ENCODE measurements at regions of chr2 and their contacts with region 1.

Region 1: DNA sequence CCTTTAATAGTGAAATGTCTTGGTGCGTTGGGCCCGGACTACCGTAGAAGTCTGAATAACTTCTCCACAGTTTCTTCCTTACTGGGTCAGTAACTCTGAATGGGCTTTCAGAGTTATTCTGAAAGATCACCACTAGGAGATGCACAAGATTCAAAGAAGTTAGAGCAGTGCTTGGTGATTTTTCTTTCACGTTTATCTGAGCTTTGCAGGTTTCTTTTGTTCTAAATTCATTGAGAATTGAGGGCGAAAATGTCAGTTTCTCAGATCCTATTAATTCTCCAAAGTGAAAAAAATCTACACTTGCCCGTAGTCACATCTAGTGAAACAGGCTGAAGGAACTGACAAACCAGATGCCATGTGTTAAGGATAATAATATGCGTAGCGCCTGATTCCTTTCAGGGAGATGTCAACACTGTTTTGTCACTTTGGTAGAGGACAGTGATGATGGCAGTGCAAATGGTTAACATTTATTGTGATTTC is 70.1 kb downstream of the QPCT start:
- DNase-seq: peak; percentile 71
- H3K4me3 ChIP-seq: no peak overlapping the region
- H3K27ac ChIP-seq: no peak overlapping the region
- H3K4me1 ChIP-seq: peaks cover 6% of the 10 kb centered on the region
- H3K27me3 ChIP-seq: no peaks in the 10 kb centered on the region
- CTCF ChIP-seq: peak; percentile 74 to 86
- POLR2A ChIP-seq: no peak

Region 2: DNA sequence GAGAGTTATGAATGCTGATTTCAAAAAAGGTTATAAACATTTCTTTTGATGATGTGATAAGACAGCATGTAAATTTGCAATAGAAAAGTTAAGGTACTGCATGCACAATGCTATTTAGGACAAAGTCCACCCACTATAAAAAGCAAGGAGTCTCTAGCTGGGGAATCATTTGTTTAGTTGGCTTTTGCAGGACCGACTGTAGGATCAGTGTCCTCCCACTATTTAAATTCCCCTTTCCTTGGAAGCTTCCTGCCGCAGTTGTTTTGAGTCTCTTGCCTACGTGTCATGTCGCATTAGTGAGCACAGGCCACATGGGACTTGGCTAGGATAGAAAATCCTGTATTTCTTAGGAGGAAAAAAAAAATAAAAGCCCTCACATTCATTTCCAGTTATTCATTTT is 57.0 kb before region 1 on chr2:
- CTCF ChIA-PET with region 1: no interaction called
- POLR2A ChIA-PET with region 1: no interaction called
- dilution Hi-C with region 1: no loop called
- intact Hi-C with region 1: no loop called
- DNase-seq: no peak
- H3K4me3 ChIP-seq: no peak overlapping the region
- H3K27ac ChIP-seq: no peak overlapping the region
- H3K4me1 ChIP-seq: no peaks in the 10 kb centered on the region
- H3K27me3 ChIP-seq: no peaks in the 10 kb centered on the region
- CTCF ChIP-seq: no peak
- POLR2A ChIP-seq: no peak

Region 3: GRCh38 chr2:37389989-37390765 is 24.3 kb before region 1 on chr2:
- CTCF ChIA-PET with region 1: interaction called, 57 read pairs
- POLR2A ChIA-PET with region 1: no interaction called
- dilution Hi-C with region 1: no loop called
- intact Hi-C with region 1: no loop called
- DNase-seq: peak; percentile 88
- H3K4me3 ChIP-seq: no peak overlapping the region
- H3K27ac ChIP-seq: peak overlapping the region; percentile 78
- H3K4me1 ChIP-seq: peaks cover 28% of the 10 kb centered on the region
- H3K27me3 ChIP-seq: no peaks in the 10 kb centered on the region
- CTCF ChIP-seq: no peak
- POLR2A ChIP-seq: peak; percentile 82

Region 4: DNA sequence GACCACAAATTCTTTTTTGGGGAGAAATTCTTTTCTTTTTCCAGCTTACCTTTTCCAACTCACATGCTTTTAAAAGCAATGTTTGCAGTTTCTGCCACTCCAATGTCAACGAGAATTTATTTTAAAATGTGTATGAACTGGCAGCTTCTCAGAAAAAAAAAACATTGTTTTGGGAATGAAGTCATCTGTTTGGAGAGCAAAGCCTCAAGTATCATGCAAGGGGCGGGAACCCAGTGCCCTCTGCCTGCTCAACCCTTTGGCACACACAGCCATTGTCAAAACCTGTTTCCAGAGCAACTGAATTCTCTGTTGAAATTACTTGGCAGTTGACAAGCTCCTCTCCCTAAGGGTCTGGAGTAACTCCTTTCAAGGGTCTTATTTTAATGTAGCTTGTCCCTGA is 58.4 kb after region 1 on chr2:
- CTCF ChIA-PET with region 1: interaction called, 14 read pairs
- POLR2A ChIA-PET with region 1: no interaction called
- dilution Hi-C with region 1: no loop called
- intact Hi-C with region 1: no loop called
- DNase-seq: peak; percentile 82
- H3K4me3 ChIP-seq: no peak overlapping the region
- H3K27ac ChIP-seq: no peak overlapping the region
- H3K4me1 ChIP-seq: peaks cover 6% of the 10 kb centered on the region
- H3K27me3 ChIP-seq: no peaks in the 10 kb centered on the region
- CTCF ChIP-seq: no peak
- POLR2A ChIP-seq: no peak

Region 5: GRCh38 chr2:37500031-37500430 is 85.5 kb after region 1 on chr2:
- CTCF ChIA-PET with region 1: no interaction called
- POLR2A ChIA-PET with region 1: no interaction called
- dilution Hi-C with region 1: no loop called
- intact Hi-C with region 1: no loop called
- DNase-seq: no peak
- H3K4me3 ChIP-seq: no peak overlapping the region
- H3K27ac ChIP-seq: no peak overlapping the region
- H3K4me1 ChIP-seq: no peaks in the 10 kb centered on the region
- H3K27me3 ChIP-seq: no peaks in the 10 kb centered on the region
- CTCF ChIP-seq: no peak
- POLR2A ChIP-seq: no peak

Region 6: DNA sequence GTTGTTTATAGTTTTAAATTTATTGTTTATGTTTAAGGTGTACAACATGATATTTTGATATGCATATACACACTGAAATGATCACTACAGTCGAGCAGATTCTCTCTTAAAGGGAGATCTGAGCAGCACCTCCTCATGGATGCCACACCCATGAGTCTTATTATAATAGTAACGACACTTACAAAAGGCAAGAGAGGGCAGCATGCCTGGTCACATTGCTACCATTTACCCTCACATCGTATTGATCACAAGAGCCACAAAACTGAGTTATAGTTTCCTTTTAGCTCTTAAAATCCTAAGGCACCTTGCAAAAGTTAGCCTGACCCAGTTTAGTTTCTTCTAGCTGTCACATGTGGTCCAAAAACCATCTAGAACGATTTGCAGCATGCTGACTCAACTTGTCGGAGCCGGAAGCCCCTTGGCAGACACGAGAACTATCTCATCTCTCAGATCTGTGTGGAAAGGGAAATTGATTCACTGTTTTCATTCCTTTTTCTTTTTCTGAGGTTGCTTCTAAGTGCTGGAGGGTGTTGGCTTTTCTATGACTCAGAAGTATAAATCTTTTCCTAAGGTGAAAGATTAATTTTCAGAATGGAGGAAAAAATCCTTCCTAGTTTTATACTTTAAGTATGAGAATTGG is 171.6 kb after region 1 on chr2:
- CTCF ChIA-PET with region 1: interaction called, 19 read pairs
- POLR2A ChIA-PET with region 1: no interaction called
- dilution Hi-C with region 1: no loop called
- intact Hi-C with region 1: loop called (anchors 2 kb)
- DNase-seq: peak; percentile 96
- H3K4me3 ChIP-seq: no peak overlapping the region
- H3K27ac ChIP-seq: peak overlapping the region; percentile 75
- H3K4me1 ChIP-seq: peaks cover 88% of the 10 kb centered on the region
- H3K27me3 ChIP-seq: no peaks in the 10 kb centered on the region
- CTCF ChIP-seq: no peak
- POLR2A ChIP-seq: no peak

Region 7: DNA sequence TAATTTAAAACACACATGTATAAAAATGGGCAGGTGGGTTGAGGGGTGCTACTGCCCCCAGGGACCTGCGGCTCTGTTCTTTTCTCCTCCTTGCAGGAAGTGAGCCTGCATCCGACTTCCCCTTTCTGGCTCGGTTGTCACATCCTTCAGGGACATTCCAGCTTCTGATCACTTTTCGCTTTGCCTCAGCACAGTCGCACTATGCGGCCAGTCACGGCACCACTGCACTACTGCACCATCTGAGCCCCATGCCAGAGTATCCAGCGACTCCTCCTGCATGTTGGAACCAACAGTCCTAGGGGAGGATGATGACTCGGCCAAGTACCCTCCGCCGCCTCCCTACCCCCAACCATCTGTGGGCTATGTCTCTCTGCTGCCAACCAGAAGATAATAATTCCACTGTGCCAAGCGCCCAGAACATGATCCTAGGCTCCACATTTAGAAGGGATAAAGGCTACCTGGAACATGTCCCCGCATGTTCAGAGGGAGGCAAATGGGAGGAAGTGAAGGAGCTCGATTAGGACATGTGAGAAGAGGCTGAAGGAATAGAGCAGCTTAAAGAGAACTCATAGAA is 239.4 kb after region 1 on chr2:
- CTCF ChIA-PET with region 1: interaction called, 28 read pairs
- POLR2A ChIA-PET with region 1: no interaction called
- dilution Hi-C with region 1: no loop called
- intact Hi-C with region 1: loop called (anchors 1 kb)
- DNase-seq: no peak
- H3K4me3 ChIP-seq: no peak overlapping the region
- H3K27ac ChIP-seq: peak overlapping the region; percentile 97
- H3K4me1 ChIP-seq: peaks cover 79% of the 10 kb centered on the region
- H3K27me3 ChIP-seq: no peaks in the 10 kb centered on the region
- CTCF ChIP-seq: no peak
- POLR2A ChIP-seq: peak; percentile 6

Region 8: DNA sequence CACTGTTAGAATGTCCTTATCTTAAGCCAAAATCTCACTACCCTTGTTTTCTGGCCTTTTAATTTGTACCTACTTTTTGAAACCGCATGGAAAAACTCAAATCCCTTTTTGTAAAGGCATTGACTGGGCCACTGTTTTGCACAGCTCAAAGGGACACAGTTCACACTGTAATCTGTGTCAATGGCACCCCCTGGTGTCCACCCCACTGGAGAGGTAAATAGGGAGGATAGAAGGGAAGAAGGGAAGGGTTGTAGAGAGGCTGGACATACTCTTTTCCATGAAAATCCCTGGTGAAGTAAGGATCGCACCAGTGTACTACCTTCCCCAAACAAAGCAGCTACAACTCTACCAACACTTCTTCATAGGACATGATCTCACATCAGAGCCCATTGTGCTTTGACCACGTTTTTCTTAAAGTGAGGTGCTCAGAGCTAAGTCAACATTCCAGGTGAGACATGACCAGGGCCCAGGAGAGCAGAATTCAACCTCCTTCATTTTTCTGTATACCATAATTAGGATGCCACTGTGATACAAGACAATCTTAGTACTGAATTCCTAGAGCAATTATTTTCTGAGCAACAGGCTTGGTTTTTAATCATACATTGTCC is 418.2 kb after region 1 on chr2:
- CTCF ChIA-PET with region 1: interaction called, 506 read pairs
- POLR2A ChIA-PET with region 1: interaction called, 6 read pairs
- dilution Hi-C with region 1: no loop called
- intact Hi-C with region 1: loop called (anchors 1 kb)
- DNase-seq: peak; percentile 85
- H3K4me3 ChIP-seq: no peak overlapping the region
- H3K27ac ChIP-seq: no peak overlapping the region
- H3K4me1 ChIP-seq: peaks cover 30% of the 10 kb centered on the region
- H3K27me3 ChIP-seq: no peaks in the 10 kb centered on the region
- CTCF ChIP-seq: peak; percentile 71 to 77
- POLR2A ChIP-seq: no peak

Region 9: GRCh38 chr2:37890893-37891495 is 476.5 kb after region 1 on chr2:
- CTCF ChIA-PET with region 1: interaction called, 9 read pairs
- POLR2A ChIA-PET with region 1: no interaction called
- dilution Hi-C with region 1: no loop called
- intact Hi-C with region 1: loop called (anchors 5 kb)
- DNase-seq: peak; percentile 69
- H3K4me3 ChIP-seq: no peak overlapping the region
- H3K27ac ChIP-seq: no peak overlapping the region
- H3K4me1 ChIP-seq: no peaks in the 10 kb centered on the region
- H3K27me3 ChIP-seq: no peaks in the 10 kb centered on the region
- CTCF ChIP-seq: peak; percentile 76 to 79
- POLR2A ChIP-seq: no peak